CD8-positive, alpha-beta memory T cell (primary cell): ENCODE measurements at regions of chr7 and their contacts with region 1.

Region 1: GRCh38 chr7:102450242-102450641 is 14.4 kb downstream of the ALKBH4 start:
- DNase-seq: peak; percentile 25 to 72 (median 36)
- H3K4me3 ChIP-seq: no peak overlapping the region
- H3K4me3 Mint-ChIP-seq: no peak overlapping the region
- H3K27ac ChIP-seq: no peak overlapping the region
- H3K27ac Mint-ChIP-seq: peak overlapping the region in 2 of 8 donors; percentile 37 to 61
- H3K4me1 ChIP-seq: no peaks in the 10 kb centered on the region
- H3K4me1 Mint-ChIP-seq: peaks cover 0 to 4% (median 0%) of the 10 kb centered on the region in 3 donors
- H3K27me3 ChIP-seq: no peaks in the 10 kb centered on the region
- H3K27me3 Mint-ChIP-seq: no peaks in the 10 kb centered on the region

Region 2: GRCh38 chr7:102376964-102377466 is 73.2 kb before region 1 on chr7:
- CTCF ChIA-PET with region 1: no interaction called
- POLR2A ChIA-PET with region 1: no interaction called
- DNase-seq: no peak
- H3K4me3 ChIP-seq: no peak overlapping the region
- H3K4me3 Mint-ChIP-seq: no peak overlapping the region
- H3K27ac ChIP-seq: no peak overlapping the region
- H3K27ac Mint-ChIP-seq: peak overlapping the region in 5 of 8 donors; percentile 4 to 71 (median 38)
- H3K4me1 ChIP-seq: no peaks in the 10 kb centered on the region
- H3K4me1 Mint-ChIP-seq: peaks cover 6 to 11% (median 8%) of the 10 kb centered on the region in 3 donors
- H3K27me3 ChIP-seq: no peaks in the 10 kb centered on the region
- H3K27me3 Mint-ChIP-seq: no peaks in the 10 kb centered on the region

Region 3: GRCh38 chr7:102396027-102397019 is 53.9 kb before region 1 on chr7 and contains the start of gene PRKRIP1:
- CTCF ChIA-PET with region 1: interaction called, 10 read pairs
- POLR2A ChIA-PET with region 1: no interaction called
- DNase-seq: peak; percentile 79 to 93 (median 87)
- H3K4me3 ChIP-seq: peak within 1 kb of the TSS; percentile 95
- H3K4me3 Mint-ChIP-seq: peak within 1 kb of the TSS; percentile 87 to 98 (median 97)
- H3K27ac ChIP-seq: peak within 1 kb of the TSS; percentile 81
- H3K27ac Mint-ChIP-seq: peak within 1 kb of the TSS; percentile 91 to 99 (median 98)
- H3K4me1 ChIP-seq: peaks cover 16% of the 10 kb centered on the region
- H3K4me1 Mint-ChIP-seq: peaks cover 19 to 29% (median 25%) of the 10 kb centered on the region in 3 donors
- H3K27me3 ChIP-seq: no peaks in the 10 kb centered on the region
- H3K27me3 Mint-ChIP-seq: no peaks in the 10 kb centered on the region
- total RNA-seq, gene PRKRIP1: 26.0 to 27.3 TPM

Region 4: DNA sequence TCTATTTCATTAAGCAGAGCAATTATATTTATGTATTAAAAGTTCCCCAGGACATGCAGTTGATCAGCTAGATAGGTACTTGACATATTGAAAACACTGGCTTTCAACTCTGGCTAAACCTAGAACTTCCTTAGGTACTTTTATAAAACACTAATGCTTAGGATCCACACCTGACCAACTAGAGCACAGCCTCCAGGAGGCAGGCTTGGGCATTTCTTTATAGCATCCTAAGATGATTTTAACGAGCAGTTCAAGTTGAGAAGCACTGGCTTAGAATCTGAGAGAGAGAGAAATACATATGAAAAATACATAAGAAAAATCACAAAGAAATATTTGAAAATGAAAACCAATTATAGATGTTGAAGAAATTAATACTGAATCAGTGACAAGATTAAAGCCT is 974.9 kb after region 1 on chr7:
- CTCF ChIA-PET with region 1: no interaction called
- POLR2A ChIA-PET with region 1: no interaction called
- DNase-seq: no peak
- H3K4me3 ChIP-seq: no peak overlapping the region
- H3K4me3 Mint-ChIP-seq: no peak overlapping the region
- H3K27ac ChIP-seq: no peak overlapping the region
- H3K27ac Mint-ChIP-seq: peak overlapping the region in 1 of 8 donors; percentile 43
- H3K4me1 ChIP-seq: no peaks in the 10 kb centered on the region
- H3K4me1 Mint-ChIP-seq: no peaks in the 10 kb centered on the region
- H3K27me3 ChIP-seq: no peaks in the 10 kb centered on the region
- H3K27me3 Mint-ChIP-seq: peaks cover 3 to 12% of the 10 kb centered on the region in 2 donors